ENCODE measurements at regions of chr17 and their contacts with region 1.

Region 1: GRCh38 chr17:75667021-75667790 is at the starts of genes RECQL5 and SAP30BP:
- DNase-seq: peak; percentile 99
- ATAC-seq: peak; percentile 100
- H3K4me3 Mint-ChIP-seq: no peak within 1 kb of the TSS
- H3K27ac Mint-ChIP-seq: peak within 1 kb of the TSS; percentile 63
- H3K4me1 Mint-ChIP-seq: peaks cover 37% of the 10 kb centered on the region
- H3K27me3 Mint-ChIP-seq: no peaks in the 10 kb centered on the region
- CTCF ChIP-seq: no peak
- total RNA-seq, gene RECQL5: 33.3 to 34.2 TPM
- total RNA-seq, gene SAP30BP: 73.0 to 75.8 TPM

Region 2: DNA sequence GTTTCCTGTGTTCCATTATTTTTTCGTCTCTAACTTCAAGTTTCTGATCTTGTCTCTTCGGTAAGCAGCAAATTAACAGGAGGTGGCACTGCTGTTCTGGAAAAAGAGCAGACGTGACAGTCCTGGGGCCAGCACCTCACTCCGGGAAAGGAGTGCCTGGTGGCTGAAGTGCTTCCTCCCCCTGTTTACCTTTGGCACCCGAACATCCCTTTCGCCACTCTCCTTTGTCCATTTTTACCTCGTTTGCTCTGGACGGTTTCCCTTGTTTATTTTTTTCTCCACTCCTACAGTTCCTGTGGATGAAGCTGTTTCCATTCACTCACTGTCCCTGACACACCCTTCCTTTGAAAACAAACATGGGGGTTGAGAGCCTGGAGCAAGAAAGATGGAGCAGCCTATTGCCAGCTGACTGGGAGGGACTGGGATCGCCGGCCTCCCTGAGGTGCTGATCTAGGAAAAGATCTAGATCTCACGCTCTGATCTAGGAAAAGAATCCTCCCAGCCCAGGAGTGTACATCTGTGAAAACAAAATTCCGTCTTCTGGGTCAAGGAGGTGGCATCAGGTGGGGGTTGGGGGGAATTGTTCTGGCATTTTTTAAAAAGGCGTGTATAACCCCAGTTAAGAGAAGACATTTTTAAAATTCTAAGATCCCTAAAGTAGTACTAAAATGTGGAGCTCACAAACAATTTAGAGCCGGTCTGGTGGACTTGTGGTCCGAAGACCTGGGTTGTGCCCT is 12.7 kb after region 1 on chr17:
- CTCF ChIA-PET with region 1: interaction called, 8 read pairs
- POLR2A ChIA-PET with region 1: interaction called, 17 read pairs
- intact Hi-C with region 1: no loop called
- DNase-seq: no peak
- ATAC-seq: no peak
- H3K4me3 Mint-ChIP-seq: no peak overlapping the region
- H3K27ac Mint-ChIP-seq: peak overlapping the region; percentile 13
- H3K4me1 Mint-ChIP-seq: peaks cover 30% of the 10 kb centered on the region
- H3K27me3 Mint-ChIP-seq: no peaks in the 10 kb centered on the region
- CTCF ChIP-seq: no peak

Measured in activated CD8-positive, alpha-beta T cell treated with anti-CD3 and anti-CD28 coated beads for 36 hours (primary cell).